Right lobe of liver (tissue), 6 donors: ENCODE measurements at regions of chr11 and their contacts with region 1.

Region 1: DNA sequence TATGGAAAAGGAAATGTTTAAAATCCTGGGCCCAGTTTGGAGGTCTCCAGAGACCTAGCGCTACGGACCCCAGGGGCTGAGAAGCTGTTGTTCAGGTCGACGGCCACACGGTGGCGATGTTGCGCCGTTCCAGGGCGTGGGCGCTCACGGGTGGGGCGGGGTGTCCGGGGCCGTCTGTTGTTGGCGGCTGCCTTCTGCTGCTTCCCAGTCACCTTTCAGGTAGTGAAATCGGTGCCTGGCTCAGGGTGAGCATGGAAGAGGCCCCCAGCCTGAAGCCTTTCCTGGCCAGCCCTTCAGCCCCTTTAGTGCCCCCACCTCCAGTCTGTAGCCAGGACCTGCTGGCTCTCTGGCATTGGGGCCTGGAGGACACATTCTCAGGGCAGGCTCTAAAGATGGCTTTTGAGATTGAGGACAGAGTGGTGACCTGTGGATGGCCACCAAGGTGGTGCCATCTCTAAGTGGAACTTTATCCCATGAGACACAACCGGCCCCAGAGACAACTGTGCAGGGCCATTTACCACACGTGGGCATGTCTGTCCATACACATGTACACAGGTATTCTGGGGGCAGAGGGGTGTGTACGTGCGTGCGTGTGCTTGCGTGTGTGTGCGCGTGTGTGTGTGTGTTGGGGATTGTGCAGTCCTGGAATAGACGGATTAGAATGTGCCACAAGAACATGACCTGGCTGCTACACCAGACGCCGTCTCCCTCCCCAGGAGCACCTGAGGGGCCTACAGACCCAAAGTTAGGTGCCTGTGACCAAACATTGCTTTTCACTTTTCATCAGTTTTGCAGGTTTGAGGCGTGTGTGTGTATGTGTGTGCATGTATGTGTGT is 53.8 kb downstream of the ST14 start:
- DNase-seq: peak; percentile 70 to 75 (median 74)
- ATAC-seq: peak; percentile 87 to 96 (median 94)
- H3K4me3 ChIP-seq: no peak overlapping the region
- H3K27ac ChIP-seq: no peak overlapping the region
- H3K4me1 ChIP-seq: no peaks in the 10 kb centered on the region
- H3K27me3 ChIP-seq: no peaks in the 10 kb centered on the region
- CTCF ChIP-seq: peak; percentile 87 to 97 (median 96)
- POLR2A ChIP-seq: no peak

Region 2: GRCh38 chr11:130314750-130315285 is 101.5 kb after region 1 on chr11 and contains the start of gene ZBTB44:
- intact Hi-C with region 1: no loop called
- DNase-seq: peak; percentile 96 to 97 (median 97)
- ATAC-seq: peak; percentile 91 to 93 (median 91)
- H3K4me3 ChIP-seq: peak within 1 kb of the TSS; percentile 84 to 94 (median 89)
- H3K27ac ChIP-seq: peak within 1 kb of the TSS; percentile 79 to 88 (median 85)
- H3K4me1 ChIP-seq: peaks cover 0 to 43% (median 16%) of the 10 kb centered on the region in 4 donors
- H3K27me3 ChIP-seq: no peaks in the 10 kb centered on the region
- CTCF ChIP-seq: no peak
- POLR2A ChIP-seq: no peak
- total RNA-seq, gene ZBTB44: 16.3 to 22.4 (median 18.4) TPM

Region 3: GRCh38 chr11:130370845-130371590 is 157.7 kb after region 1 on chr11:
- intact Hi-C with region 1: loop called in 1 of 2 experiments (anchors 10 kb)
- DNase-seq: no peak
- ATAC-seq: peak; percentile 44 to 73 (median 55)
- H3K4me3 ChIP-seq: no peak overlapping the region
- H3K27ac ChIP-seq: no peak overlapping the region
- H3K4me1 ChIP-seq: no peaks in the 10 kb centered on the region
- H3K27me3 ChIP-seq: no peaks in the 10 kb centered on the region
- CTCF ChIP-seq: peak; percentile 18 to 34 (median 26)
- POLR2A ChIP-seq: no peak

Region 4: DNA sequence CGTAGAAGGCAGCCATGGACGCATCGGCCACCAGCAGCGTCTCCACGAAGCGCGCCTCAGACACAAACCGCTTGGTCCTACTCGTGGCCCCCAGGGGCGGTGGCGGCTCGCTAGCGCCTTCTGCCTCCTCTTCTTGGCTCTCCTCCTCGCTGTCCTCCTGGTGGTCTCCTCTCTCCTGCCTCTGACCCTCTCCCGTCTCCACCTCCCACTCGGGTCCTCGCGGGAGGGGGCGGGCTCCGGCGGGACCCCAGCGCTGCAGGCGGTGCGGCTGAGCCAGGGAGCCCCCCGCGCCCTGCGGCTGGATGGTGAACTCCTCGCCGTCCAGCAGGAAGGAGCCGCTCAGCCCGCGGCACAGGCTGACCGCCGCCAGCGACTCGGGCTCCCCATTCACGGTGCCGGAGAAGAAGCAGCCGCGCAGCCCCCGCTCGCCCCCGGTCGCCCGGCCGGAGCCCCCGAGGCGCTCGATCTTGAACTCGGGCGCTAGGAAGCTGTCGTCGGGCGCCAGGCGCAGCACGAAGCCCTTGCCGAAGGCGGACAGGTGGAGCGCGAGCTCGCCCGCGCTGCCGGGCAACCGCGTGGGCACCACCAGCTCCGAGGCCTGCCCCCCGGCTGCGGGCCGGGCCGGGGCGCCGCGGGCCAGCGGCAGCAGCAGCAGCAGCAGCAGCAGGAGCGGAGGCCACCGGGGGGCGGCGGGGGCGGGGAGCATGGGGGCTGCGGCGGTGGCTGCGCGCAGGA is 214.4 kb after region 1 on chr11:
- intact Hi-C with region 1: loop called in 1 of 2 experiments (anchors 10 kb)
- DNase-seq: no peak
- ATAC-seq: no peak
- H3K4me3 ChIP-seq: peak overlapping the region in 1 of 3 donors; percentile 27
- H3K27ac ChIP-seq: no peak overlapping the region
- H3K4me1 ChIP-seq: peaks cover 0 to 12% (median 2%) of the 10 kb centered on the region in 4 donors
- H3K27me3 ChIP-seq: peaks cover 6 to 13% of the 10 kb centered on the region in 2 donors
- CTCF ChIP-seq: no peak
- POLR2A ChIP-seq: no peak

Region 5: GRCh38 chr11:130861902-130862860 is 648.8 kb after region 1 on chr11:
- intact Hi-C with region 1: loop called in 1 of 2 experiments (anchors 10 kb)
- DNase-seq: peak; percentile 90 to 91 (median 91)
- ATAC-seq: peak; percentile 77
- H3K4me3 ChIP-seq: no peak overlapping the region
- H3K27ac ChIP-seq: no peak overlapping the region
- H3K4me1 ChIP-seq: peaks cover 0 to 20% (median 9%) of the 10 kb centered on the region in 4 donors
- H3K27me3 ChIP-seq: no peaks in the 10 kb centered on the region
- CTCF ChIP-seq: peak; percentile 100
- POLR2A ChIP-seq: no peak